ENCODE measurements at regions of chr6 and their contacts with region 1.

Region 1: GRCh38 chr6:111353912-111354462 is 129.0 kb downstream of the REV3L start:
- DNase-seq: no peak
- H3K4me3 ChIP-seq: no peak overlapping the region
- H3K27ac ChIP-seq: peak overlapping the region in 1 of 4 donors; percentile 25
- H3K4me1 ChIP-seq: peaks cover 0 to 12% (median 0%) of the 10 kb centered on the region in 4 donors
- H3K27me3 ChIP-seq: no peaks in the 10 kb centered on the region
- CTCF ChIP-seq: no peak
- EP300 ChIP-seq: no peak
- POLR2A ChIP-seq: no peak

Region 2: GRCh38 chr6:111642463-111643158 is 288.6 kb after region 1 on chr6:
- intact Hi-C with region 1: loop called (anchors 5 kb)
- DNase-seq: peak; percentile 78
- H3K4me3 ChIP-seq: no peak overlapping the region
- H3K27ac ChIP-seq: no peak overlapping the region
- H3K4me1 ChIP-seq: peaks cover 0 to 16% (median 10%) of the 10 kb centered on the region in 4 donors
- H3K27me3 ChIP-seq: no peaks in the 10 kb centered on the region
- CTCF ChIP-seq: peak; percentile 29 to 59 (median 55)
- EP300 ChIP-seq: no peak
- POLR2A ChIP-seq: no peak